ENCODE measurements at regions of chr10 and their contacts with region 1.

Region 1: DNA sequence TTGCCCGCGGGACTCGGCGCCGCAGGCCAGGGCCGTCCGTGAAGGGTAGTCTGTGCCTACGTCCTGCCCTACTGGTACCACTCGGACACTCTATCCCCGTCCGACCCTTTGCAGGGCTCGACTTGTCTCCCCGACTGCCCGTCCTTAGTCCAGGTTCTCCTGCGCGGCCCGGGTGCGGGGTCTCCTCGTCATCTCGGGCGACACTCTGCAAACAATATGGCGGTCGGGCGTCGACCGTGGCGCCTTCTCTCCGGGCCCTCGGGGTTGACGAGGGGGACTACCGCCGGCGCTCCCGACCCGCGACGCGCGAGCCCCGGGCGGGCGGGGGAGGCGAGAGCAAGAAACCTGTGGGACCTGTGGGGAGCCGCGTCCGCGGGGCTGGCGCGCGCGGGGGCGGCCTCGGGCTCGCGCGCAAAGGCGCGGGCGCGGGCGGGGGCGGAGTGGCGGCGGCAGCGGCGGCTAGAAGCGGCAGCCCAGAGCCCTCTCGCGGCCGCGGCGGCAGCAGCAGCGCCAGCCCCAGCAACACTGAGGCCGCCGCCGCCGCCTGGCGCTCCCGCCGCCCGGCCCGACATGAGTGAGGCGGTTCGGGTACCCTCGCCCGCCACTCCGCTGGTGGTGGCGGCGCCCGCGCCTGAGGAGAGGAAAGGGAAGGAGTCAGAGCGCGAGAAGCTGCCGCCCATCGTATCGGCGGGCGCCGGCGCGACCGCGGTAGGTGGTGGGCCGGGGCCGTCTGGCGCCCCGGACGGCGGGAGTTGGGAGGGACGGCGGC is at the start of gene HECTD2:
- DNase-seq: peak; percentile 65 to 92 (median 82)
- ATAC-seq: peak; percentile 86
- H3K4me3 ChIP-seq: peak within 1 kb of the TSS; percentile 91 to 97
- H3K4me3 Mint-ChIP-seq: peak within 1 kb of the TSS; percentile 86
- H3K27ac ChIP-seq: peak within 1 kb of the TSS; percentile 90 to 95
- H3K27ac Mint-ChIP-seq: peak within 1 kb of the TSS; percentile 90
- H3K4me1 ChIP-seq: peaks cover 12% of the 10 kb centered on the region
- H3K4me1 Mint-ChIP-seq: peaks cover 13% of the 10 kb centered on the region
- H3K27me3 ChIP-seq: no peaks in the 10 kb centered on the region
- H3K27me3 Mint-ChIP-seq: no peaks in the 10 kb centered on the region
- CTCF ChIP-seq: peak; percentile 41
- total RNA-seq, gene HECTD2: 0.69 to 1.5 TPM

Region 2: DNA sequence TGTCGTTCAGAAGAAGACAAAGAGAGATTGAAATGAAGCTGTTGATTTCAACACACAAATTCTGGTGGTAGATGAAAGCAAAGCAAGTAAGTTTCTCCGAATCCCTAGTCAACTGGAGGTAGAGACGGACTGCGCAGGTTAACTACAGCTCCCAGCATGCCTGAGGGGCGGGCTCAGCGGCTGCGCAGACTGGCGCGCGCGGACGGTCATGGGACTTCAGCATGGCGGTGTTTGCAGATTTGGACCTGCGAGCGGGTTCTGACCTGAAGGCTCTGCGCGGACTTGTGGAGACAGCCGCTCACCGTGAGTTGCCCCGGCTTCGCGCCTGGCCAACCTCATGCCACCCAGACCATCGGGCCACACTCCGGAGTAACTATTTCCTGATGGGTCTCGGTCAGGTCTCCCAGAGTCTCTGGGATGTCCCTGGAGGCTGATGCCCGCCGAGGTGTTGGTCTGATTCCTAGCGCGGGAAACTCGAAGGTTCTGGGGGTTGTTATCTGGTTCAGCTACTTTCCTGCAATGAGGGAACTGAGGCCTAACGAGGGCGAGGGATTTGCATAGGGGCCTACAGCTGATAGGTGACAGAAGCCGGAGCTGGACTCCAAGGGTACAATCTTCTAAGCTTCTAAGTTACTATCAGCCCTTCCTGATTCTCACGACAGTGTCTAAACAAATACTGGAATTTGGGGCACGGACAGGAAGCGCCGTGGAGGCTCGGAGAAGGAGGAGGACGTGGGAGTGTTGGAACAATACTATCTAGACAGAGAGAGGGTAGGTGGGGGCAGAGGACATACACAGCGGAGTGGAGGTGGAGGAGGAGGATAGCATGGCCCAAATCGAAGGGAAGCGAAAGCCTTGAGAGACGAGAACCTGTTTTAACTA is 538.0 kb before region 1 on chr10 and contains the start of gene RPP30:
- CTCF ChIA-PET with region 1: interaction called, 3 read pairs
- POLR2A ChIA-PET with region 1: no interaction called
- intact Hi-C with region 1: loop called in 1 of 2 experiments (anchors 5 kb)
- DNase-seq: peak; percentile 65 to 84 (median 79)
- ATAC-seq: peak; percentile 99
- H3K4me3 ChIP-seq: peak within 1 kb of the TSS; percentile 73 to 95
- H3K4me3 Mint-ChIP-seq: peak within 1 kb of the TSS; percentile 97
- H3K27ac ChIP-seq: peak within 1 kb of the TSS; percentile 34 to 58
- H3K27ac Mint-ChIP-seq: peak within 1 kb of the TSS; percentile 88
- H3K4me1 ChIP-seq: peaks cover 18% of the 10 kb centered on the region
- H3K4me1 Mint-ChIP-seq: peaks cover 40% of the 10 kb centered on the region
- H3K27me3 ChIP-seq: no peaks in the 10 kb centered on the region
- H3K27me3 Mint-ChIP-seq: peaks cover 20% of the 10 kb centered on the region
- CTCF ChIP-seq: no peak
- total RNA-seq, gene RPP30: 29.7 TPM

Region 3: DNA sequence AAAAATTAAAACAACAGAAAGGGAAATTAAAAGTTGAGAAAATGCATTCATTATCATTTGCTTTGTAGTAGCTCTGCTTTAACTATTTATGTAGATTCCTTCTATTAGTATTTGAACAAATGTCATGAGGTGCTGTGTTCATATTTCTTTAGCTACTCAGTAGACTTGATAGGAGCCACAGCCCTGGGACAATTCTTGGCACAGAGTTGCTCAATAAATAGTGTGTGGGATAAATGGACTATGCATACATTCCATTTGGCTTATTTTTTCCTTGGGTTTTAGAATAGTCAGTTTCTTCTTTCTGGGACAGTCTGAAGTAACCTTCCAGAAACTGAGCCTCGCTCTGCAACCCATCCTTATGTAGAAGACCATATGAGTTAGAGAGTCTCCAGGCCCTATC is 524.9 kb before region 1 on chr10:
- CTCF ChIA-PET with region 1: no interaction called
- POLR2A ChIA-PET with region 1: no interaction called
- intact Hi-C with region 1: loop called in 1 of 2 experiments (anchors 2 kb)
- DNase-seq: no peak
- ATAC-seq: no peak
- H3K4me3 ChIP-seq: no peak overlapping the region
- H3K4me3 Mint-ChIP-seq: no peak overlapping the region
- H3K27ac ChIP-seq: no peak overlapping the region
- H3K27ac Mint-ChIP-seq: no peak overlapping the region
- H3K4me1 ChIP-seq: no peaks in the 10 kb centered on the region
- H3K4me1 Mint-ChIP-seq: no peaks in the 10 kb centered on the region
- H3K27me3 ChIP-seq: no peaks in the 10 kb centered on the region
- H3K27me3 Mint-ChIP-seq: no peaks in the 10 kb centered on the region
- CTCF ChIP-seq: no peak

Region 4: GRCh38 chr10:91923371-91924211 is 513.5 kb after region 1 on chr10 and contains the start of gene BTAF1:
- CTCF ChIA-PET with region 1: interaction called, 3 read pairs
- POLR2A ChIA-PET with region 1: interaction called, 5 read pairs
- intact Hi-C with region 1: loop called (anchors 1 to 5 kb)
- DNase-seq: peak; percentile 82 to 97 (median 93)
- ATAC-seq: peak; percentile 94
- H3K4me3 ChIP-seq: peak within 1 kb of the TSS; percentile 87 to 97
- H3K4me3 Mint-ChIP-seq: peak within 1 kb of the TSS; percentile 99
- H3K27ac ChIP-seq: peak within 1 kb of the TSS; percentile 92 to 97
- H3K27ac Mint-ChIP-seq: peak within 1 kb of the TSS; percentile 98
- H3K4me1 ChIP-seq: peaks cover 36% of the 10 kb centered on the region
- H3K4me1 Mint-ChIP-seq: peaks cover 50% of the 10 kb centered on the region
- H3K27me3 ChIP-seq: peaks cover 0 to 2% of the 10 kb centered on the region in 2 experiments
- H3K27me3 Mint-ChIP-seq: peaks cover 2% of the 10 kb centered on the region
- CTCF ChIP-seq: no peak
- total RNA-seq, gene BTAF1: 88.6 to 90.7 TPM

Region 5: DNA sequence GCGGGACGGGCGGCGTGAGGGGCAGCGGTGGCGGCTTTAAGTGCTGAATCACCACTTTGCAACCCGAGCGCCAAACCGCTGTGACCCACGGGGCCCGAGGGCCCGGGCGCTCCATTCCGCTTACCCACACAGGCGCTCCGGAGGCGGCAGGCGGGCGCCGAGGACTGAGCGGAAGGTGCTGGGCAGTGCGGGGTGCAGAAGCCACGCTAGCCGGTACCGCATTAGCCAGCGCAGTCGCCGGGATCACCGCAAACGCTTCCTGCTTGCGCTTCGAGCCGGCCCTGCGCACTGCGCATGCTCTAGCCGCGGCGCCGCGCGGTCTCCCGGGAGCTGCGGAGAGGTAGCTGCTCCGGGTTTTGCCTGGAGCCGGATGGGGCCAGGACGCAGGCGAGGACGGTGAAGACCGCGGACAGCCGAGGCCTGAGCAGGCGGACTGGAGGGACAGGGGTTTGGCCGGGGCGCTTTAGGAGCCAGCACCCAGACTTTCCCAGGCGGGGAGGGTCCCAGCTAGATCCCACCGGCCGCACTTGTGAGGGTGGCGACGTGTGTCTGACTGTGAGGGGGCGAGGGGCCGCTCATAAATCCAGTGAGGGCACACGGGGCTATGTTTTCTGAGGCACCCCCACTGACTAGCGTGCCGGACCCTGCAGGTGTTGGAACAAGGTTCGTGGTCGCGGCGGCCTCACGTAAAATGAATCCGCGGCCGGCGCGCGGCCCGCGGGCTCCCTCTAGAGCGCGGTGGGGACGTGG is 1163.9 kb after region 1 on chr10 and contains the start of gene IDE:
- CTCF ChIA-PET with region 1: no interaction called
- POLR2A ChIA-PET with region 1: no interaction called
- intact Hi-C with region 1: loop called in 1 of 2 experiments (anchors 10 kb)
- DNase-seq: peak; percentile 43 to 89 (median 76)
- ATAC-seq: peak; percentile 70
- H3K4me3 ChIP-seq: peak within 1 kb of the TSS; percentile 85 to 100
- H3K4me3 Mint-ChIP-seq: peak within 1 kb of the TSS; percentile 93
- H3K27ac ChIP-seq: peak within 1 kb of the TSS; percentile 74 to 92
- H3K27ac Mint-ChIP-seq: peak within 1 kb of the TSS; percentile 93
- H3K4me1 ChIP-seq: peaks cover 18% of the 10 kb centered on the region
- H3K4me1 Mint-ChIP-seq: peaks cover 42% of the 10 kb centered on the region
- H3K27me3 ChIP-seq: no peaks in the 10 kb centered on the region
- H3K27me3 Mint-ChIP-seq: no peaks in the 10 kb centered on the region
- CTCF ChIP-seq: no peak
- total RNA-seq, gene IDE: 12.1 to 13.2 TPM

Measured in CD8-positive, alpha-beta T cell (primary cell).